Cardiac septum (tissue), 1 donor: ENCODE measurements at regions of chr12 and their contacts with region 1.

Region 1: GRCh38 chr12:14239350-14239934 is 126.0 kb upstream of the ATF7IP start:
- DNase-seq: no peak

Region 2: DNA sequence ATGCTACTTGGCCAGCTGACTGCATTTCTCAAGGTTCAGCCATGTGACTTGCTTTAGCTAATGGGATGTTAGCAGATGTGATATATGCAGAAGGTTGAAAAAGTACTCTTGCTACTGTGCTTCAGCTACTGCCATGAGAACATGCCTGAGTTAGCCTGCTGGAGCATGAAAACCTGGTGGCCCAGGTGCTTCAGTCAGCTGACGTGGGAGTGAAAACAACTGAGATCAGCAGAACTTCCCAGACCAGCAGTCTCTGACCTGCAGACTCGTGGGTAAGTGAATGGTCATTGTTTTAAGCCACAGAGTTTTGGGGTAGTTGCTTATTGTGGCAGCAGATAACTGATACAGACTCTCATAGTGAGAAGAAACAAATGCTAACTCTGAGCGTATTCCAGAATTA is 139.4 kb before region 1 on chr12:
- intact Hi-C with region 1: no loop called
- DNase-seq: no peak

Region 3: DNA sequence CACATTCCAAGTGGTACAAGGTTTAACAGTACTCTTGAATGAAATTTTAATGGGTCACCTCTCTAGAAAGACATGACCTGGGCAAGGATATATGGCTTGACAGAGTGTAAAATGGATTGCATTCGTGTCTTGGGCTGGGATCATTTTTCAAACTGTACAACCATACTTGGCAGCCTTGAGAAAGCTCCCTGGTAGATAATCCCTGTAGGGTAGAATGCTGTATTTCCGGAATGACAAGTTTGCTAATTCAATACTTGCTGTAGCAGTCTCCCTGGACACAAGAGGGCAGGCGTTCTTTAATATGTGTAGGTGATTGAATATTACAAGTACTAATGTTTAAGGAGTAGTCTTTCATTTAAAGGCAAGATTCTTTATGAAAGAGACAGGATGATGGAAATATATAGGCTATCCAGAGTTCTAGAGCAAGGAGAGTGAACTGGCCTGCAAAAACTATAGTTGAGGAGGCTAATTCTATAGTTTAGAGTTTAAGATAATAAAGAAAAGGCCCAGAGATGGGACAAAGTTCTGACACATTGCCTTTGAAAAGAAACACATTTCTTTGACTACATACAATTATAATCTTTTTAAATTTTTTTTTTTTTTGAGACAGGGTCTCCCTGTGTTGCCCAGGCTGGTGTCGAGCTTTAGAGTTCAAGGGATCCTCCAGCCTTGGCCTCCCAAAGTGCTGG is 274.9 kb after region 1 on chr12:
- intact Hi-C with region 1: loop called (anchors 10 kb)
- DNase-seq: no peak

Region 4: DNA sequence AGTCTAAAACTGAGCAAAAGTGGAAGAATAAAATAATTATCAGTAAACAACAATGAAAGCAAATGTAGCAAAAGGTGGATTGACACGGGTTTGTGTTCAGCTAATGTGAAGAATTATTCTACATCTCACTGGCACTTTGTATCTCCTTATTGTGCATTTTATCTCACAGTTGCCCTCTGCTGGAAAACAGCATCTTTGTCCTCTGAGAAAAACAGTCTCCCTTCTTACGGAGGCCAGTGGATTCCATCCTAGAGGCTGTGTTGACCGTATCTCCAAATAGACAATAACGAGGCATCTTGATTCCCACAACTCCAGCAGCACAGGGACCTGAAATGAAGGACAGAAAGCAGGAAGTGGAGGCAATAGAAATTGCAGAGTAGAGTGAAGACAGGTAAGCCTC is 379.5 kb after region 1 on chr12:
- intact Hi-C with region 1: loop called (anchors 5 kb)
- DNase-seq: no peak

Region 5: DNA sequence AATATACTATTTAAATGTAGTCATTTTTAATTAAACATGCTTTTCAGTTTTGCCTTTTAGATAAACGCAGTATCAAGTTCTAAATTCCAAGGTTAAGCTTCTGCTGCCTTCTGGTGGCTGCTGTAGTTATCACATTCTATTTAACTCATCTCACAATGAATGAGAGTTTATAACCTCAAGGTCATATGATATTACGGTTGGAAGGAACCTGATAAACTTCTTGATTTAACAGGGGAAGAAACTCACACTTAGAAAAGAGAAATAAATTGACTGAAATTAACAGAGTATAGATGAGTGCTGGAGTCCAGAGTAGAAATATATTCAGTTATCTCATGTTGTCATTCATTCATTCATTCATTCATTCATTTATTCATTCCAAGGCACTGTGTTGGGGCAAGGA is 425.1 kb after region 1 on chr12:
- intact Hi-C with region 1: loop called (anchors 5 kb)
- DNase-seq: no peak